ENCODE measurements at regions of chr7 and their contacts with region 1.

Region 1: DNA sequence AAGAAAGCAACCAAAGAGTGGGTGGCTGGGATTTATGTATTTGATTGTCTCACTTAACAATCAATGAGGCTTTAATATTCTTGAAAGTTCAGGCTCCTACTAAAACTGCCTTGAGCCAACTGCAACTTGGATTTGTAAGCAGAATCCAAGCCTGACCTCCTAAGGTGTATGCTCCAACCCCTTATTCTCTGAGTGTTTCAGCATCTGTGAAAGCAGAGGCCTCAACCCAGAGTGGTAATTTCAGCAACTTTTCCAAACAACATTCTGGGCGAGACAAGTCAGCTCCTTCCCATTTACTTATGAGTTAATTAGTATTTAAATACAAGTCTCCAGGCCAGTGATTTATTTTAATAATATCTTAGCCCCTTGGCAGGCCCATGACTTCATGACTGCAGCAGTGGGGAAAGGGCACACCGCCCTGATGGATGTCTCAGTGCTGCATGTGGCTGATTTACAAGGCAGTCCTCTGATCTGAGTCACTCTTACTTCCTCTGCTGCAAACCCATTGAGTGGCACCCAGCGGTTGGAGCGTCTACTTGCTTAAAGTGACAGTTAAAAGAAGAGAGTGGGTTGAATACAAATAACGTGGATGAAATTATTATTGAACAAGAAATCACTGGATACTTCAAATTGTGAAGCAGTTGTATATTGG is 209.1 kb downstream of the TRIL start:
- DNase-seq: peak; percentile 82
- H3K4me3 ChIP-seq: no peak overlapping the region
- H3K27ac ChIP-seq: no peak overlapping the region
- H3K4me1 ChIP-seq: peaks cover 23% of the 10 kb centered on the region
- H3K27me3 ChIP-seq: no peaks in the 10 kb centered on the region
- CTCF ChIP-seq: peak; percentile 5 to 39

Region 2: GRCh38 chr7:28389504-28390395 is 359.3 kb before region 1 on chr7:
- CTCF ChIA-PET with region 1: no interaction called
- dilution Hi-C with region 1: no loop called
- in situ Hi-C with region 1: no loop called
- intact Hi-C with region 1: loop called (anchors 5 kb)
- DNase-seq: peak; percentile 58
- H3K4me3 ChIP-seq: peak overlapping the region; percentile 26 to 58 (median 30)
- H3K27ac ChIP-seq: no peak overlapping the region
- H3K4me1 ChIP-seq: peaks cover 9% of the 10 kb centered on the region
- H3K27me3 ChIP-seq: no peaks in the 10 kb centered on the region
- CTCF ChIP-seq: peak; percentile 58 to 65

Region 3: GRCh38 chr7:28573059-28573553 is 176.0 kb before region 1 on chr7:
- CTCF ChIA-PET with region 1: no interaction called
- dilution Hi-C with region 1: no loop called
- in situ Hi-C with region 1: no loop called
- intact Hi-C with region 1: loop called (anchors 10 kb)
- DNase-seq: peak; percentile 82
- H3K4me3 ChIP-seq: no peak overlapping the region
- H3K27ac ChIP-seq: no peak overlapping the region
- H3K4me1 ChIP-seq: peaks cover 32% of the 10 kb centered on the region
- H3K27me3 ChIP-seq: peaks cover 6% of the 10 kb centered on the region
- CTCF ChIP-seq: no peak

Measured in mammary epithelial cell (primary cell).